ENCODE measurements at regions of chr11 and their contacts with region 1.

Region 1: GRCh38 chr11:6619004-6619745 is at the start of gene TPP1:
- DNase-seq: peak; percentile 98
- H3K4me3 ChIP-seq: peak within 1 kb of the TSS; percentile 58 to 81 (median 68)
- H3K27ac ChIP-seq: peak within 1 kb of the TSS; percentile 85 to 98 (median 86)
- H3K4me1 ChIP-seq: peaks cover 0 to 24% (median 22%) of the 10 kb centered on the region in 4 donors
- H3K27me3 ChIP-seq: no peaks in the 10 kb centered on the region
- CTCF ChIP-seq: no peak
- EP300 ChIP-seq: peak in 1 of 4 donors; percentile 51
- POLR2A ChIP-seq: peak; percentile 84 to 86
- total RNA-seq, gene TPP1: 39.8 to 58.8 (median 45.9) TPM

Region 2: DNA sequence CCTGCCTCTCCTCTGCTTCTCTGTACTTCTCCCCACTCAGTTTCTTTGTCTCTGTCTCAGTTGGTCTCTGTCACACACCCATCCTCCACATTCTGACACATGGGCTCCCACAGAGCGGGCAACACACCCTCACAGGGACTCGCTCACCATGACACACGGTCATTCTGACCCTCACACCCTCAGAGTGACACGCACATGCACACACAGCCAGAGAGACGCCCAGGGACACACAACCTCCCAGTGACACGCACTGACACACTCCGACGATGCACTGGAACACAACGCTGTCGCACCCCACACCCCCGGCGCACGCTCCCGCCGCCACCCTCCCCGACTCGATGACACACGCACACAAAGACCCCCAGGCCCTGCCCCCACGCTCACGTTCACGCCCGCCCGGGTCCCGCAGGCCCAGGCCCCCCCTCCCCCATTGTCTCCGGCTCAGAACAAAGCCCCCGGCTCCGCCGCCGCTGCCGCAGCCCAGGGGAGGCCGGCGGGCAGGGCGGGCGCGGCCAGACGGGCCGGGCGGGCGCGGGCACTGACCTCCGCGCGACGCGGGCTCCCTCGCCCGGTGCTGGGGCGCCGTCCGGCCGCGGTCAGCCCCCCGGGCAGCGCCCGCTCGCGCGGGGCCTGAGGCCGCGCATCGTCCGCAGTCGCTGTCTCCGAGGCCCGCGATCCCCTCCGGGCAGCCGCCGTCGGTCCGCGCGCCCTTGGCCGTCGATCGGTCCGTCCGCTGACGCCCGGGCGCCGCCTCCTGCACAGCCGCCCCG is 36.0 kb after region 1 on chr11:
- intact Hi-C with region 1: loop called (anchors 2 kb)
- DNase-seq: peak; percentile 74
- H3K4me3 ChIP-seq: peak overlapping the region; percentile 48 to 68 (median 64)
- H3K27ac ChIP-seq: peak overlapping the region; percentile 72 to 91 (median 84)
- H3K4me1 ChIP-seq: peaks cover 0 to 34% (median 24%) of the 10 kb centered on the region in 4 donors
- H3K27me3 ChIP-seq: no peaks in the 10 kb centered on the region
- CTCF ChIP-seq: no peak
- EP300 ChIP-seq: no peak
- POLR2A ChIP-seq: no peak